ENCODE measurements at regions of chr4 and their contacts with region 1.

Region 1: DNA sequence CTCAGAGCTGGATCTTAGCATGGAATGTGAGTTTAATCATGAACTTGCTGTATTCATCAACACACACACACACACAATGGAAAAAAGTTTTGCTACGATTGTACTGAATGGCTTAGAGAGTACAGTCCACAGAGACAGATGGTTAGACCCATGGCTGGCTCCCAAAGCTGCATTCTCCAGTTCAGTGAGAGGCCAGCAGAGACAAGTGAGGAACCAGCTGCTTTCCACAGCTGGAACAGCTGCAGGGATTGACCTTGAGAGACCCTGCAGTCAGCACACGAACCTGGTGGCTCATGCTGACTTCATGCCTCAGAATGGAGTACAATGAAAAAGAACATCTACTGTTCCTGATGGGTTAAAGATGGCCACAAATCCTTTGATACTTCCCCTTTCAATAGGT is 94.5 kb downstream of the DHX15 start:
- DNase-seq: no peak
- ATAC-seq: no peak
- H3K4me3 ChIP-seq: no peak overlapping the region
- H3K27ac ChIP-seq: no peak overlapping the region
- H3K4me1 ChIP-seq: no peaks in the 10 kb centered on the region
- H3K27me3 ChIP-seq: no peaks in the 10 kb centered on the region
- CTCF ChIP-seq: no peak
- POLR2A ChIP-seq: no peak

Region 2: DNA sequence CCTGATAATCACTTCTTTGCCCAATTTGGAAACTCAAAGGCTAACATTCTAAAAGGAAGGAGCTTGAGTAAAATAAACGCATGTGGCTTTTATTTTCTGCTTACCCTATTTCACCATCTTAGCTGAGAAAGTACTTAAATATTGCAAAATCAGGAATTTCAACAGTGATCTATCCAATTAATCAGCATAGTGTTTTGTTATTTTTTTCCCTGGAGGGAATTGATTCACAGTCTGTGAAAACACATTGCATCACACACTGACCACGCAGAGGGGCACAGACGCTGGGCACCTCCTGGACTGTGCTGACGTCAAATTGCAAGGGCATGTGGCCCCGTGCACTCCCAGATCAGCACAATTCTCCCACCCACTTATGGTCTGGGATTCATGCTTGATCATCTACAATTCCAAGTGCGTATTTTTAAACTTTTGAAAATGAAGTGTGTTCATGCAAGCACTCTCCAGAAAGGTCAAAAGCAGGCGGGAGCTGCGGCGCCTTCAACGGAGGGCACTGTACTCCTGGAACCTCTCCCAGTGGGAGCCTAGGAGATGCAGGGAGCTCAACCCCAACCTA is 279.5 kb before region 1 on chr4:
- intact Hi-C with region 1: no loop called
- DNase-seq: peak; percentile 82 to 94 (median 92)
- ATAC-seq: peak; percentile 87 to 98 (median 95)
- H3K4me3 ChIP-seq: no peak overlapping the region
- H3K27ac ChIP-seq: peak overlapping the region; percentile 85
- H3K4me1 ChIP-seq: peaks cover 0 to 32% (median 13%) of the 10 kb centered on the region in 4 donors
- H3K27me3 ChIP-seq: no peaks in the 10 kb centered on the region
- CTCF ChIP-seq: no peak
- POLR2A ChIP-seq: peak; percentile 38

Region 3: GRCh38 chr4:24675721-24676389 is 186.0 kb after region 1 on chr4:
- intact Hi-C with region 1: loop called (anchors 10 kb)
- DNase-seq: no peak
- ATAC-seq: no peak
- H3K4me3 ChIP-seq: no peak overlapping the region
- H3K27ac ChIP-seq: no peak overlapping the region
- H3K4me1 ChIP-seq: no peaks in the 10 kb centered on the region
- H3K27me3 ChIP-seq: no peaks in the 10 kb centered on the region
- CTCF ChIP-seq: no peak
- POLR2A ChIP-seq: no peak

Region 4: DNA sequence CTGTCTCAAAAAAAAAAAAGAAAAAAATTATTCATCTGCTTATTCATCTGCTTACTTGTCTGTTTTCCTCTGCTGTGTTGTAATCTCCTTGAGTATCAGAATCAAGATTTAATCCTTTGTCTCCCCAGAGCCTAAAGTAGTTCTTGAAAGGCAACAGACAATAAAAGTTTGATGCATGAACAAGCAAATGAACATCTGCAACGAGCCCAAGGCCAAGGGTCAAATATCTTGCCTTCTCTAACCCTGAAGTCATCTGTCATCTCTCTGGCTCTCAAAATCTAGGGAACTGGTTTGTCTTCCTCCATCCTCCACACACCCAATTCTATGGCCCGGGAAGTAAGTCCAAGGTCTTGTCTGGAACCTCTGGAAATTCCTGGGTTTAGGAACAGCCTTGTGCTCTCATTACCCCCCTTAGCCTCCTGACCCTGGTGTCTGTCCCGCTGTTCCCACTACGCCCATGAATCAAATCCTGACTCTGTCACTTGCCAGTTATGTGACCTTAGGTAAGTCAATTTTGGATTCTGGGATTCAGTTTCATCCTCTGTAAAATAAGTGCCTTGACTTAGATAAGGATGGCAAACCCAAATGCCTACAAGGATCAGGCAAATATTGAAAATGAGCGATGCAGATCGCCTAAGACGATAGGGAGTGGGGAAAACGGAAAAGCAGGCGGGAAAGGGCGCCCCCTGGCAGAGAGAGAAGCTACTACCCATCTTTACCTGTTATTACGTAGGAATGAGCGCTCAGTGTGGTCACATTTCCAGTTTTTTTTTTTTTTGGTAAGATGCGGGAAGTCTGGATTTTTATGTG is 197.2 kb after region 1 on chr4:
- intact Hi-C with region 1: loop called in 1 of 2 experiments (anchors 10 kb)
- DNase-seq: peak in 1 of 3 donors; percentile 24
- ATAC-seq: peak; percentile 51 to 74 (median 66)
- H3K4me3 ChIP-seq: no peak overlapping the region
- H3K27ac ChIP-seq: no peak overlapping the region
- H3K4me1 ChIP-seq: no peaks in the 10 kb centered on the region
- H3K27me3 ChIP-seq: no peaks in the 10 kb centered on the region
- CTCF ChIP-seq: peak; percentile 48 to 56 (median 52)
- POLR2A ChIP-seq: no peak

Measured in right lobe of liver (tissue), 6 donors.